ENCODE measurements at regions of chr12 and their contacts with region 1.

Region 1: DNA sequence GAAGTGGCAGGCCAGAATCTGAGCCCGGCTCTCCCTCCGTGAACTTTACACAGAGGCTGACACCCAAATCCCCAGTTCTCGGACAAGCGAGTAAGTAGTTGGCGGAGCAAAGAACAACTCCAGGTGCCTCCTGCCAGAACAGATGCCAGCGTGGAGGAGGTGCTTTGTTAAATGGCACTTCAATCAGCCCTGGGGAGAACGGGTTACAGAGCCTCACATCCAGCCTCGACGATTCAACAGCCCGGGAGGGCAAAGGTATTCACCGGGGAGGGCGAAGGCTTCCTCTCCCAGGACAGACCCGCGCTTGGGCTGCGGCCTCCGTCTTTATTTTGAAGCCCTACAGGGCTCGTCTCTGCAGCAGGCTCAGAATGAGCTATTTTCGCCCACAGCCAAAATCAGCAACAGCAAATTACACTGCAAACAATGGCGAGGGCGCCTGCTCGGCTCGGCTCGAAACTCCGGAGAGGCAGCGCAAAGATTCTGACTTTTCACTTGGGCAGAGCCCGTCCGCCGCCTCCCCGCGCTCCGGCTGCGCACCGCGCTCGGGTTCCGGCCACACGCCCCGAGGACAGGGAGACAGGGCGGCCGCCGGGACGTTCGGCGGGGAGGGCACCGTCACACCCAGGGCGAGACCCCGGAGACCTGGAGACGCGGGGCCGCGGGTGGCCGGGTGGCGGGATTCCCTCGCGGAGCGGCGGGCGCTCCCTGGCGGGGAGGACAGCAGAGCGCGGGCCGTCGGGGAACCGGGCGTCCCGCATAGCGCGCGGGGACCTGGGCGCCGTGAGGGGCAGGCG is 811 bp downstream of the TMCC3 start:
- DNase-seq: peak; percentile 72
- H3K4me3 ChIP-seq: peak overlapping the region; percentile 43 to 79 (median 69)
- H3K27ac ChIP-seq: peak overlapping the region; percentile 62 to 83 (median 70)
- H3K4me1 ChIP-seq: peaks cover 0 to 15% (median 6%) of the 10 kb centered on the region in 4 donors
- H3K27me3 ChIP-seq: no peaks in the 10 kb centered on the region
- CTCF ChIP-seq: peak in 2 of 4 experiments; percentile 34 to 42
- EP300 ChIP-seq: no peak
- POLR2A ChIP-seq: no peak

Region 2: DNA sequence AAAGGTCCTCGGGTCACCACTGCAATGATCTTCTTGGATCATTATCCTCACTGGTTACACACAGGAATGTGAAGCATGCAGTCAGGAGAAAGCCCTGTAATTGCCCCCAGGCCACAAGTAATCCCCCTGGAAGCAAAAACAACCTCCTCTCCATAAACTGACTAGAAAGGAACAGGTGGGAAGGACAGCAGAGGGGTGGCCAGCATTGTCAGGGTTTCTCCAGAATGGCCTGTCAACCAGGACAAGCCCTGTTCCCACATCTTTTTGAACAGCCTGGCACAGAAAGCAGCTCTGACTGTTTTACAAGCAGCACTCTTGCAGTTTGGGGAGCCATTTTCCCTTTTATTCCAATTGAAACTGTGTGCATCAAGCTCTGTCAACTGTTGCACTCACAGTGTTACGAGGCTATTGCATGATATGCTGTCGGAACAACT is 35.2 kb before region 1 on chr12:
- intact Hi-C with region 1: loop called (anchors 5 kb)
- DNase-seq: no peak
- H3K4me3 ChIP-seq: no peak overlapping the region
- H3K27ac ChIP-seq: peak overlapping the region in 3 of 4 donors; percentile 52 to 73 (median 66)
- H3K4me1 ChIP-seq: peaks cover 0 to 30% (median 18%) of the 10 kb centered on the region in 4 donors
- H3K27me3 ChIP-seq: no peaks in the 10 kb centered on the region
- CTCF ChIP-seq: no peak
- EP300 ChIP-seq: no peak
- POLR2A ChIP-seq: no peak

Region 3: DNA sequence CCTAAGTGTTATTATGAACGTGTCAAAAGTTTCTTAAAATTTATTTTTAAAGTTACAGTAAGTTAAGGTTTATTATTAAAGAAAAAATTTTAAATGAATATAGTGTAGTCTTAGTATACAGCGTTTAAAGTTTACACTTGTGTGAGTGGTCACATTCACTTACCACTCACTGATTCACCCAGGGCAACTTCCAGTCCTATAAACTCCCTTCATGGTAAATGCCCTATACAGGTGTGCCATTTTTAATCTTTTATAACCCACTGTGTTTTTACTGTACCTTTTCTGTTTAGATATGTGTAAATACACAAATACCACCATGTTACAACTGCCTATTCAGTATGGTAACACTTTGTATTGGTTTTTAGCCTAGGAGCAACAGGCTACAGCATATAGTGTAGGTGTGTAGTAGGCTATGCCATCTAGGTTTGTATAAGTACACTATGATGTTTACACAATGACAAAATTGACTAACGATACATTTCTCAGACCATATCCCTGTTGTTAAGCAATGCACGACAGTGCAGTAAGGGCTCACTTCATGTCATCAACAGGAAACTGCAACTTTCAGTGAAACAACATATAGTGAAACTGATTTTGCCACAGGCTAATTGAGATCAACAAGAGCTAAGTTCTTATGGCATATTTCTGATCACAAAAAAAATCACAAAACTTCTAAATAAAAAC is 112.9 kb after region 1 on chr12:
- intact Hi-C with region 1: loop called (anchors 10 kb)
- DNase-seq: no peak
- H3K4me3 ChIP-seq: no peak overlapping the region
- H3K27ac ChIP-seq: no peak overlapping the region
- H3K4me1 ChIP-seq: peaks cover 0 to 6% (median 0%) of the 10 kb centered on the region in 4 donors
- H3K27me3 ChIP-seq: no peaks in the 10 kb centered on the region
- CTCF ChIP-seq: no peak
- EP300 ChIP-seq: no peak
- POLR2A ChIP-seq: no peak

Region 4: DNA sequence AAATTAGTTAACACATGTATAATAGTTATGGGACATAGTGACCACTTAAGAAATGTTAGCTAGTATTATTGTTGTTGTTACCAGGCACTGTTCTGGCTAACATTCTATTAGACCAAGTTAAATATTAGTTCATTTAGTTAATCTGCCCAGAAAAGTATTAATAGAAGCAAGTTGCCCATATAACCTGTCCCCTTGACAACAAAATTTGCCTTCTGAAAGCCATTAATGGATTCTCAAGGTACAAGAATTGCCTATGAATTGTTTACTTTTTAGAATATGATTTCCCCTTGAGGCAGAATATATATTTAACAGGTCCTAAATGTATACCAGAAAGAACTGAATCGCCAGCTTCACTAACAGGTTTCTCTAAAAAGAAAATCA is 168.1 kb after region 1 on chr12:
- intact Hi-C with region 1: no loop called
- DNase-seq: no peak
- H3K4me3 ChIP-seq: no peak overlapping the region
- H3K27ac ChIP-seq: no peak overlapping the region
- H3K4me1 ChIP-seq: no peaks in the 10 kb centered on the region
- H3K27me3 ChIP-seq: no peaks in the 10 kb centered on the region
- CTCF ChIP-seq: no peak
- EP300 ChIP-seq: no peak
- POLR2A ChIP-seq: no peak

Region 5: DNA sequence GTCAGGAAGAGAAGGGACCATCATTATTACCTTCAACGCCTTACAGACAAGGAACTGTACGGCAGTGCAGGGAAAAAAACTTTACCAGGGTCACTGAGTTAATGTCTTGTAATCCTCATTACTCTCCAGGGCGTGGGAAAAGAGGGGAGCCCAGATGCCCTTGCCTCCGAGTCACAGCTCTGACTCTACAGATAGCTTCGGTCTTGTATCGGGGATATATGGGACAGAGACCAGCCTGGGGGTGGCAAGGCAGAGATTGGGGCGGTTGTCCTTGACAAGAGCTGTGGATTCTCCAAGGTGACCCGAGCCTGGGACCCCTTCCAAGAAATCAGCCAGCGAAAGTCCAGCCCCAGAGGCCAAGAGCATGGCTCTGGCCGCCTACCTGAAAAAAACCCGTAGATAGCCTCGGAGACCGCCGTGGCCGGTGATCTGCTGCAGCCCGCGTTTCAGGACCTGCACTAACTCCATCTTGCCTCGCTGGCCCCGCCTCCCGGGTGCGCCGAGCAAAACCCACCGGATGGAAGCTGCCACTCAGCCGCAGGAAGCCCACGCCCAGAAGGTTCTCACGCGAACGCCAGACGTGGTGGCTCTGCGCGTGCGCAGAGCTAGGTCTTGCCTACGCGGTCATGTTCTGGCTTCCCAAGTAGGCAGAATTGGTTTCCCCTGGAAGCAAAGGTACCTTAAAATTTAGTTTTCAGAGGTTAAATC is 353.8 kb after region 1 on chr12 and contains the start of gene NDUFA12:
- intact Hi-C with region 1: loop called (anchors 10 kb)
- DNase-seq: peak; percentile 97
- H3K4me3 ChIP-seq: peak within 1 kb of the TSS; percentile 79 to 94 (median 82)
- H3K27ac ChIP-seq: peak within 1 kb of the TSS; percentile 83 to 90 (median 86)
- H3K4me1 ChIP-seq: peaks cover 0 to 26% (median 10%) of the 10 kb centered on the region in 4 donors
- H3K27me3 ChIP-seq: no peaks in the 10 kb centered on the region
- CTCF ChIP-seq: no peak
- EP300 ChIP-seq: no peak
- POLR2A ChIP-seq: peak; percentile 67 to 72
- total RNA-seq, gene NDUFA12: 95.4 to 240 (median 145) TPM

Measured in sigmoid colon (tissue), 7 donors.